Activated B cell treated with CpG ODN at 0.5 μM for 24 hours (primary cell): ENCODE measurements at regions of chr12 and their contacts with region 1.

Region 1: GRCh38 chr12:53727310-53728041 is at the start of gene CALCOCO1:
- DNase-seq: peak; percentile 90
- ATAC-seq: peak; percentile 97
- H3K4me3 Mint-ChIP-seq: peak within 1 kb of the TSS; percentile 97
- H3K27ac Mint-ChIP-seq: peak within 1 kb of the TSS; percentile 88
- H3K4me1 Mint-ChIP-seq: peaks cover 24% of the 10 kb centered on the region
- H3K27me3 Mint-ChIP-seq: no peaks in the 10 kb centered on the region
- CTCF ChIP-seq: no peak
- total RNA-seq, gene CALCOCO1: 44.2 and 59.5 TPM in 2 replicates

Region 2: DNA sequence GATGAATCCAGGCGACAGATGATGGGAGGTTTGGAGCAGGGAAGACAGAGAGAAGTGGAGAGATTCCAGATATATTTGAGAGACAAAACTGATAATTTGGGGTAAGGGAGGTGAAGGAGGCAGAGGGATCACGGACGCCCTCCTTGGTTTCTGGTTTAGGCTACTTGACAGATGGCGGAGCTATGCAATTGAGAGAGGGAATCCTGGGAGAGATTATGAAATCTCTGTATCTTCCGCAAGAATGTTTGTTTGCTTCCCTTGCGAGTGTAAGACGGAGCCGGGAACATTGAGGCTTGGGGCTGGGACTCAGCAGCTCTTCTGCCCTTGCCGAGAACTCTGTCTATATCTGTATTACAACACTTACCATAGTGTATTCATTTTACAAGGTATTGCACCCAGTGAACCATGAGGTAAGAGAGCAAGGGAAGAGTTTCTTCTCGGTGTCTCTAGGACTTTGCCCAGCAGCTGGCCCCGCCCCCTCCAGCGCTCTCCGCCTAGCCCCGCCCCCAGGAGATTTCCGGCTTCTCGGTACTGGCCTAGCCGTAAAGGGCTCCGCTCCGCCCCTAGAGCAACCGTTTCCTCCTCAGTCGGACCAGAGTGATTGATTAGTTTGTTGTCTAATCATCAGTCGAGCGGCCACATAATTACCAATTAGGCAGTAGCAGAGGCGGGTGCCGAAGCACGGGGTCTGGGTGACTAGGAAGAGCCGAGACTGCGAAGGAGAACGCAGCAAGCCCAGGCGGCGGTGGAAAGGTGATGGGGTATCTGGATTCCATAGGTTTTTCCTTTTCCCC is 286.2 kb before region 1 on chr12 and contains the start of gene PRR13:
- CTCF ChIA-PET with region 1: no interaction called
- POLR2A ChIA-PET with region 1: no interaction called
- intact Hi-C with region 1: loop called (anchors 1 kb)
- DNase-seq: peak; percentile 88
- ATAC-seq: peak; percentile 98
- H3K4me3 Mint-ChIP-seq: peak within 1 kb of the TSS; percentile 93
- H3K27ac Mint-ChIP-seq: peak within 1 kb of the TSS; percentile 93
- H3K4me1 Mint-ChIP-seq: peaks cover 40% of the 10 kb centered on the region
- H3K27me3 Mint-ChIP-seq: no peaks in the 10 kb centered on the region
- CTCF ChIP-seq: no peak
- total RNA-seq, gene PRR13: 266 and 288 TPM in 2 replicates

Region 3: GRCh38 chr12:53518381-53518780 is 209.1 kb before region 1 on chr12:
- CTCF ChIA-PET with region 1: no interaction called
- POLR2A ChIA-PET with region 1: no interaction called
- intact Hi-C with region 1: no loop called
- DNase-seq: no peak
- ATAC-seq: no peak
- H3K4me3 Mint-ChIP-seq: no peak overlapping the region
- H3K27ac Mint-ChIP-seq: no peak overlapping the region
- H3K4me1 Mint-ChIP-seq: no peaks in the 10 kb centered on the region
- H3K27me3 Mint-ChIP-seq: no peaks in the 10 kb centered on the region
- CTCF ChIP-seq: no peak

Region 4: GRCh38 chr12:53675651-53676453 is 51.6 kb before region 1 on chr12 and contains the start of gene ATP5MC2:
- CTCF ChIA-PET with region 1: interaction called, 4 read pairs
- POLR2A ChIA-PET with region 1: interaction called, 7 read pairs
- intact Hi-C with region 1: loop called (anchors 1 kb)
- DNase-seq: peak; percentile 92
- ATAC-seq: peak; percentile 94
- H3K4me3 Mint-ChIP-seq: peak within 1 kb of the TSS; percentile 99
- H3K27ac Mint-ChIP-seq: peak within 1 kb of the TSS; percentile 97
- H3K4me1 Mint-ChIP-seq: peaks cover 30% of the 10 kb centered on the region
- H3K27me3 Mint-ChIP-seq: peaks cover 18% of the 10 kb centered on the region
- CTCF ChIP-seq: peak; percentile 85
- total RNA-seq, gene ATP5MC2: 330 and 354 TPM in 2 replicates

Region 5: DNA sequence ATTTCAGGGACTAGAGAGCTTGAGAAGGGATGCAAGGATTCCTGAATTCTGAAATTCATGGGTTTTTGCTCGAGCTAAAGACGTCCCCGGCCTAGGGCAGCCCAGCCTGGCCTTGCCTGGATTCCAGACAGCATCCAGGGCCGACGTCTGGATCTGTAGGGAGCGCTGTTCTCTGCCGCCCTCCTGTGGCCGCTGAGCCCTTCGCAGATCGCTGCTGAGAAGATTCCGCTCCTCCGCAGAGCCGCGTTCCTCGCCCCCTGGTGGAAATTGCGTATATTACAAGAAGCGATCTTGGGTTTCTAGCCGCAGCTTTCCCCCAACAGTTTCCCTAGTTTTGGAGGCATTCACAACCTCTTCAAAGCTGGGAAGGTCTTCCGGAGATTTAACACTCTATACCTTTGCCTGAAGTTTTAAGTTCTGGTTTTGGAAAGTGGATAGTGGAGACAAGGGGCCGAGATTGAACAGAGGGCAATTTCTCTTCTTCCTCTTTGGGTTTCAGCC is 19.2 kb after region 1 on chr12:
- CTCF ChIA-PET with region 1: interaction called, 138 read pairs
- POLR2A ChIA-PET with region 1: interaction called, 11 read pairs
- intact Hi-C with region 1: loop called (anchors 1 kb)
- DNase-seq: peak; percentile 70
- ATAC-seq: peak; percentile 75
- H3K4me3 Mint-ChIP-seq: peak overlapping the region; percentile 44
- H3K27ac Mint-ChIP-seq: peak overlapping the region; percentile 57
- H3K4me1 Mint-ChIP-seq: peaks cover 18% of the 10 kb centered on the region
- H3K27me3 Mint-ChIP-seq: peaks cover 40% of the 10 kb centered on the region
- CTCF ChIP-seq: peak; percentile 100

Region 6: GRCh38 chr12:53892760-53893159 is 165.3 kb after region 1 on chr12:
- CTCF ChIA-PET with region 1: no interaction called
- POLR2A ChIA-PET with region 1: no interaction called
- intact Hi-C with region 1: no loop called
- DNase-seq: no peak
- ATAC-seq: no peak
- H3K4me3 Mint-ChIP-seq: no peak overlapping the region
- H3K27ac Mint-ChIP-seq: no peak overlapping the region
- H3K4me1 Mint-ChIP-seq: no peaks in the 10 kb centered on the region
- H3K27me3 Mint-ChIP-seq: peaks cover 14% of the 10 kb centered on the region
- CTCF ChIP-seq: no peak

Region 7: DNA sequence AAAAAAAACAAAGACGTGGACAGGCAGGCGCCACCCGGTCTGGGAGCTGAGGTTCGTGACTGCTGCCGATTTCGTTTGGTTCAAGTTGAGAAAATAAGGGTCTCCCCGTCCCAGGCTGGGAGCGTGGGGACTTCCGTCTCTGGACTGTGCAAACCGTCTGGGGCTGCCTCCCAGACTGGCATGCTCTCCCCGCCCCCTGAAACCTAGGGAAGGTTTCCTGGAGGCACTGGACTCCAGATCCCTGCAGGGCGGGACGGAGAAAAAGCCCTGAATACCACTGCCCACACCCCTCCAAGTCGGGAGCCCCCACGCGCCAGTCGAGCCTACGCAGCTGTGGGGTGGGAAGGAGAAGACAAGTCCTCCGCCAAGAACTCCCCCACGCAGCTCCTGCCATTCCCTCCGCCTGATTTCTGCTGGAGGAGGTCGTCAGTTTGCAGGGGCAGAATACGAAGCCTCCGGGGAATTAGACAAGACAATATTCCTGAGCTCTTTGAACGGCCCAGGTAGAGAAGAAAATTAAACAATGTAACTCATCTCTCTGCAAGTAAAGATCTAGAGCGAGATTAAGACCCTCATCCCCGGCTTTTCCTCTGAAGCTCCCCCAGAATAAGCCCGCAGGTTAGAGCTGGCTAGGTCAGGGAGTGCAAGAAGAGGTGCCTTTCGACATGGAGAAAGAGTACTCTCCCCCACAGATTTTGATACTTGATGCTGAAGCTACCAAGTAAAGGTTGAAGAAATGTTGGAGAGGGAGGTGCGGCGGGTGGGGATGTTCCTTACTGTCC is 200.8 kb after region 1 on chr12:
- CTCF ChIA-PET with region 1: no interaction called
- POLR2A ChIA-PET with region 1: no interaction called
- intact Hi-C with region 1: no loop called
- DNase-seq: no peak
- ATAC-seq: no peak
- H3K4me3 Mint-ChIP-seq: no peak overlapping the region
- H3K27ac Mint-ChIP-seq: no peak overlapping the region
- H3K4me1 Mint-ChIP-seq: peaks cover 7% of the 10 kb centered on the region
- H3K27me3 Mint-ChIP-seq: peaks cover 83% of the 10 kb centered on the region
- CTCF ChIP-seq: no peak